ENCODE measurements at regions of chr1 and their contacts with region 1.

Region 1: DNA sequence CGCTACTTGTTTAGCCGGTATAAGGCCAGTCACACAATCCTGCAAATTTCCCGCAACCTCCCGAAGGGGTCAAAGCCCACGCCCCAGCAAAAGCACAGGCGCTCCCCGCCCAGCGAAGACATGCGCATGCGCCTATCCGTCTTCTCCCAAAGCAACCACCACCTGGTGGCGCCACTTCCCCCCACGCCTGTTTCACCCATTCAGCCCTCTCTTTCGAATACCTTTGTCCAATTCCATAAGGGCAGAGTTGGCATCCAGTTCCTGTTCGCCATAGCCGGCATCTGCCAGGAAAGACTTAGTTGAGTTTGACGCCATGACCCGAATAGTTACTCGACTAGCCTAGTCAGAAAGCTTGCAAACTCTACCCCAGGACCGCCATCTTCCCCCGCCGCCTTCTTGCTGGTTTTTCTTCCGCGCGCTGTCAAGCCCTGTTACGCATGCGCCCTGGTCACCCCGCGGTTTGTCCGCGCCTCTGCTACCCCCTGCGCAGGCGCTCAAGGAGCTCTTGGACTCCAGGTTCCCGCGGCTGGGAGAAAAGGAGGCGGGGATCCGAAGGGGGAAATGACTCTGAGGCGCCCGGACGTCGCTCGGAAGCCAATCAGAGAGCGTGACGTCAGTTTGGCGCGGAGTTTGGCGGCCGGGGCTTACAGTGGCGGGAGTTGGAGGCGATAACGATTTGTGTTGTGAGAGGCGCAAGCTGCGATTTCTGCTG is at the starts of genes DTL and INTS7:
- DNase-seq: peak; percentile 100
- ATAC-seq: peak; percentile 75
- H3K4me3 ChIP-seq: peak within 1 kb of the TSS; percentile 88
- H3K27ac ChIP-seq: peak within 1 kb of the TSS; percentile 80
- H3K4me1 ChIP-seq: peaks cover 61% of the 10 kb centered on the region
- H3K27me3 ChIP-seq: no peaks in the 10 kb centered on the region
- CTCF ChIP-seq: peak; percentile 98
- total RNA-seq, gene DTL: 57.9 and 65.0 TPM in 2 replicates
- total RNA-seq, gene INTS7: 25.3 and 28.3 TPM in 2 replicates

Region 2: GRCh38 chr1:211698161-211699026 is 336.9 kb before region 1 on chr1:
- CTCF ChIA-PET with region 1: interaction called, 5 read pairs
- POLR2A ChIA-PET with region 1: no interaction called
- intact Hi-C with region 1: loop called (anchors 2 kb)
- DNase-seq: peak; percentile 87
- ATAC-seq: peak; percentile 98
- H3K4me3 ChIP-seq: peak overlapping the region; percentile 22; the same call in 1 of the 2 replicates
- H3K27ac ChIP-seq: no peak overlapping the region
- H3K4me1 ChIP-seq: no peaks in the 10 kb centered on the region
- H3K27me3 ChIP-seq: no peaks in the 10 kb centered on the region
- CTCF ChIP-seq: peak; percentile 99

Region 3: DNA sequence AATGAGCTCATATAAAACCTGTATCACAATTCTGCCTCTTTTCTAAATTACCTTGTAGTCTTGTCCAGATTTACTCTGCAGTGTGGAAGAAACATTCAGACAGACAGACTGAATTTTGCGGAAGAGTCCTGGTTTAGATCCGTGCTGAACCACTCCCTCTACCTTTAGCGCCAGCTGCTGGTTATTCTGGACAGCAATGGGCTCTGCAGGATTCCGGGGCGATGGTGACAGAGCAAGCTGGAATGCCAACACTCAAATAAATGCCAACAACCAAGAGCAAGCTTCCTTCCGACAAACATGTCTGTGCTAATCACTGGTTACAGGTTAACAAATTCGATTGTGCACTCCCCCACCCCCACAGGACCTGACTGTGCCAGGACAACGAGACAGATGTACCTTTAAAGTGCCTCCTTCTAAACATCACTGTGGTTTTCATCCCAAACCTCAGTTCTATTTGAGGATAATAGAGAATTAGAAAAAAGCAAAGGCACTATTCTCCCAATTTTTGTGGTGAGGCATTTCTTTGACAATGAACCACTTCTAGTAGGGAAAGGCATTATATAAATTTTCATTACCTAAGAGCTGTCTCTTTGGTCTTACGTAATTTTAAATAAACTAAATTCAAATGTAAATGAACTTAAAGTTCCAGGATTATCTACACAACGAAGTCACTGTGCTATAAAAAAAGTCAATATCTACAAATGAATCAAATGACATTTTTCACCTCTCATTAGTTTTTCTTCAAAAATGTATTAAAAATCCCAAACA is 90.4 kb before region 1 on chr1:
- CTCF ChIA-PET with region 1: interaction called, 10 read pairs
- POLR2A ChIA-PET with region 1: no interaction called
- intact Hi-C with region 1: loop called (anchors 2 kb)
- DNase-seq: peak; percentile 95
- ATAC-seq: peak; percentile 100
- H3K4me3 ChIP-seq: no peak overlapping the region
- H3K27ac ChIP-seq: no peak overlapping the region
- H3K4me1 ChIP-seq: peaks cover 10% of the 10 kb centered on the region
- H3K27me3 ChIP-seq: no peaks in the 10 kb centered on the region
- CTCF ChIP-seq: peak; percentile 99

Region 4: DNA sequence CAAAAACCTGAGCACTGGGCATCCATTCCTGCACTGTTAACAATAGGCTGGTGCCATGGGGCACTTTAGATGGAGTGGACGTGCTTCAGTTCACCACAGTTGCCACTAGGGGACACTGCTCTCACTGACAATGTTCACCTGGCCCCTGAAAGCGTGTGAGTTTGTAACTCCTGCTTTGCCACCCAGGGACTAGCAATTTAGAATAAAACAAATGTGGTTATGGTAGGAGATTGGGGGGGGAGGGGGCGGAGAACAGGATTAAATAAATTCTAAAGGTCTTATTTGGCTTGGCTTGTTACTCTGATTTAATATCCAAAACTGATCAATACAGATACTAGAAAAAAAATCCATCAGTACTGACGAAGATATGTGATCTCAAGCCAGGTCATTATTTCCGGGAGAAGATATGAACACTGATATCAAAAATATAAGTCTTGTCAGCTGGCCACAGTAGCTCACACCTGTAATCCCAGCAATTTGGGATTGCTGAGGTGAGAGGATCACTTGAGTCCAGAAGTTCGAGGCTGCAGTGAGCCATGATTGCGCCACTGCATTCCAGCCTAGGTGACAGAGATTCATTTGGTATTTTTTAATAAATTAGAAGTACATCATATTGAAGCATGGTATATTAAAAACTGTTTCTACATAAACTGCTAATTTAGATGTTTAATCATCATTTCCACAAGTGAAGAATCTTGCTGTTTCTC is 23.1 kb before region 1 on chr1:
- CTCF ChIA-PET with region 1: interaction called, 18 read pairs
- POLR2A ChIA-PET with region 1: interaction called, 5 read pairs
- intact Hi-C with region 1: loop called (anchors 1 kb)
- DNase-seq: peak; percentile 89
- ATAC-seq: peak; percentile 97
- H3K4me3 ChIP-seq: no peak overlapping the region
- H3K27ac ChIP-seq: no peak overlapping the region
- H3K4me1 ChIP-seq: peaks cover 3% of the 10 kb centered on the region; the same call in 1 of the 2 replicates
- H3K27me3 ChIP-seq: no peaks in the 10 kb centered on the region
- CTCF ChIP-seq: peak; percentile 99